ENCODE measurements at regions of chr5 and their contacts with region 1.

Region 1: DNA sequence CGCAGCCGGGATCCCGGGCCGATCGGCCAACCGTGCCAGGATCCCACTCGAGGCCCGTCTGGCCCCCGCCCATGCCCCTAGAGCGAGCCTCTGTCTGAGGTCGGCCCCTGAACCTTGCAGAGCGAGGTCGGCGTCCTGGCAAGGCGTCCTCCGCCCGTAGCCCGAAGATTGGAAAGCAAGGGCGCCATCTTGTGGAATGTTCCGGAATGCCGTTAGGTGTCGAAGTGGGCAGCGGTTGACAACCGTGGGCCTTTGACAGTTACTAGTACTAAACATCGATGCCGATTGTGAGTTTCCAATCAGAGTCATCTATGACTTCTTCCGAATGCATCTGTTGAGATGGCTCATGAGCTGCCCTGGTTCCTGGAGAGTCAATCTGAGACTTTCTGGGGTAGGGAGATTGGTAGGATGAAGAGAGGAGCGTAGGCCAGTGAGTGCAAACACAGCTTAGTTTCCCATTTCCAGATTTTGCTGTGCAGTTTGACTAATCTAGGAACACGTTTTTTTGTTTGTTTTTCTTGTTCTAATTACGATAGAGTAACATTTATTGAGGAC is 923 bp upstream of the PLK2 start:
- DNase-seq: peak; percentile 72 to 92 (median 88)
- H3K4me3 ChIP-seq: peak overlapping the region; percentile 54 to 98 (median 86)
- H3K27ac ChIP-seq: peak overlapping the region; percentile 57 to 98 (median 93)
- H3K27me3 ChIP-seq: no peaks in the 10 kb centered on the region
- CTCF ChIP-seq: peak; percentile 72 to 97 (median 88)

Region 2: GRCh38 chr5:57298295-57298984 is 1162.4 kb before region 1 on chr5:
- intact Hi-C with region 1: loop called (anchors 1 kb)
- DNase-seq: peak; percentile 44 to 87 (median 80)
- H3K4me3 ChIP-seq: peak overlapping the region in 31 of 59 donors; percentile 2 to 50 (median 36)
- H3K27ac ChIP-seq: peak overlapping the region in 4 of 59 donors; percentile 16 to 55 (median 32)
- H3K27me3 ChIP-seq: no peaks in the 10 kb centered on the region
- CTCF ChIP-seq: peak; percentile 63 to 92 (median 84)

Region 3: GRCh38 chr5:57662991-57663390 is 797.8 kb before region 1 on chr5:
- intact Hi-C with region 1: loop called in 1 of 2 experiments (anchors 10 kb)
- DNase-seq: no peak
- H3K4me3 ChIP-seq: no peak overlapping the region
- H3K27ac ChIP-seq: peak overlapping the region in 5 of 59 donors; percentile 6 to 53 (median 35)
- H3K27me3 ChIP-seq: no peaks in the 10 kb centered on the region
- CTCF ChIP-seq: peak in 4 of 56 donors; percentile 8 to 17 (median 10)

Region 4: DNA sequence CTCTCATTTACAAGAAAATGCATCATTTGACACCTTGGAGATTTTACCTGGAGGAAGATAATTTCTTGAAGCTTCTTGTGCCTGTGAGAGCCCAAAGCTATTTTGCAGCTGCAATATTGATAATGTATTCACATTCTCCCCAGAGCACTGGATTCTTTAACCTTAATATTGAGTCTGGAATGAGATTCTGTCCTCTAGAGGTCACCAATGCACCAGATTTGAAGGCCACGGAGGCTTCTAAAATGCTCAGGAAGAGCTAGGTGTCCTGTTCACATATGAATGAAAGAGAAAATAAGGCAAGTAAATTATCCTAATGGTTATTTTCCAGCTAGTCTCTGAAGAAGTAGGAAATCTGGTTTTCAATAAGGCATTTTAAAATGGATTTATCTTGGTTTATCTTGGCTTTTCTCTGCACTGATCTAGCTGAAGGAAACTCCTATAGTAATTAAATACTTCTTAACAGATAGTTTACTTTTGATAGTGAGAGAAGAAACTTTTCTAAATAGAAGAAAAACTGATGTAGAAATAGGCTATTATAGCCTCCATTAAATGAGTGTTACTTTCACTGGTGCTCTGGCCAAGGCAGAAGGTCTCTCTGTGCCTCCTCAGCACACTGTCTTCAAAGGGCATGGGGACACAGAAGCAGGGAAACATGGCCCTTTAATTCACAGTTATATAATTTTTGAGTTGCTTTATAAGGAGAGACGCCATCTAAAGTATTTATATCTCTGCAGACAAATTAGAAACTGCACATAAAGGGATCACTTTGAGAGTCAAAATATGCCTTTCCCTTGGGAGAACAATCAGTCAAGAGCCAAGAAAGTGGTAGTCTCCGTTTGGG is 681.2 kb before region 1 on chr5:
- intact Hi-C with region 1: loop called (anchors 1 to 2 kb)
- DNase-seq: peak in 3 of 10 donors; percentile 21 to 63 (median 47)
- H3K4me3 ChIP-seq: peak overlapping the region in 1 of 59 donors; percentile 3
- H3K27ac ChIP-seq: peak overlapping the region in 42 of 59 donors; percentile 1 to 84 (median 53)
- H3K27me3 ChIP-seq: no peaks in the 10 kb centered on the region
- CTCF ChIP-seq: peak in 55 of 56 donors; percentile 50 to 89 (median 72)

Region 5: DNA sequence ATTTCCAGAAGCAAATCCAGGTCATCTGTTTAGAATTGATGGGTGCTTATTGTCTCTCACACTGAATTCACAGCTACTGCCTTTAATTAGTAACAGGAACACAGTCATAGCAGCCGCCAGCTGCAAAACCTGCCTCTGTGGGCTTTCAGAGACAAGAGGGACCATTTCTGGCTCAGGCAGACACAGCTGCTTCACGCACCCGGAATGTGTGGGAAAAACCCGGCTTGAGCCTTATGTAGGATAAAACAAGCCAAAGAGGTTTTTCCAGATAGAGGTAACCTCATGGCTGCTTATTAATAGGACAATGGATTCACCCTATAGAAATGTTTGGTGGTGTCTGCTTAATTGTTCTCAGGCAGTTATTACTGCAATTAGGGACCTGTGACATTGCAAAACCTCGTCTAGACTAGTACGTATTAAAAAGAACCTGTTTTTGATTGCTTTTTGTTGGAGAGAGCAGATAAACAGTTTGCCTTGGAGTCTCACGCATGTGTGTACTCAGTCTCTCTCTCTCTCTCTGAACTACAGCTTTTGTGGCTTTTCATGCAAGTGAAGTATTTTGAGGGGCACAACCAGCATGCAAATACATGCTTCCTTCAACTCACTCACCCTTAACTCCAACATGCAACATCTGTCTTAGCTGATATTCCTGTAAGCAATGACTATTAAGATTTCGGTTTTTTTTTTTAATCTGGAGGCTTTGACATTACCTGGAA is 303.7 kb before region 1 on chr5:
- intact Hi-C with region 1: loop called in 1 of 2 experiments (anchors 5 kb)
- DNase-seq: peak in 9 of 10 donors; percentile 7 to 81 (median 66)
- H3K4me3 ChIP-seq: peak overlapping the region in 1 of 59 donors; percentile 3
- H3K27ac ChIP-seq: peak overlapping the region in 50 of 59 donors; percentile 0 to 88 (median 61)
- H3K27me3 ChIP-seq: no peaks in the 10 kb centered on the region
- CTCF ChIP-seq: no peak

Region 6: GRCh38 chr5:58424181-58424580 is 36.6 kb before region 1 on chr5:
- intact Hi-C with region 1: no loop called
- DNase-seq: no peak
- H3K4me3 ChIP-seq: no peak overlapping the region
- H3K27ac ChIP-seq: no peak overlapping the region
- H3K27me3 ChIP-seq: no peaks in the 10 kb centered on the region
- CTCF ChIP-seq: no peak

Region 7: GRCh38 chr5:58545912-58546311 is 85.1 kb after region 1 on chr5:
- intact Hi-C with region 1: no loop called
- DNase-seq: no peak
- H3K4me3 ChIP-seq: no peak overlapping the region
- H3K27ac ChIP-seq: no peak overlapping the region
- H3K27me3 ChIP-seq: no peaks in the 10 kb centered on the region
- CTCF ChIP-seq: no peak

Region 8: GRCh38 chr5:59999056-59999455 is 1538.2 kb after region 1 on chr5:
- intact Hi-C with region 1: no loop called
- DNase-seq: no peak
- H3K4me3 ChIP-seq: no peak overlapping the region
- H3K27ac ChIP-seq: no peak overlapping the region
- H3K27me3 ChIP-seq: no peaks in the 10 kb centered on the region
- CTCF ChIP-seq: no peak